Prostate gland (tissue), 2 donors: ENCODE measurements at regions of chr2 and their contacts with region 1.

Region 1: GRCh38 chr2:205680067-205680466 is 2.2 kb upstream of the NRP2 start:
- DNase-seq: no peak
- H3K4me3 ChIP-seq: no peak overlapping the region
- H3K27ac ChIP-seq: no peak overlapping the region
- H3K4me1 ChIP-seq: no peaks in the 10 kb centered on the region
- H3K27me3 ChIP-seq: no peaks in the 10 kb centered on the region
- CTCF ChIP-seq: peak in 3 of 4 experiments; percentile 46 to 59 (median 57)
- POLR2A ChIP-seq: no peak

Region 2: GRCh38 chr2:204024503-204024902 is 1655.6 kb before region 1 on chr2:
- intact Hi-C with region 1: loop called (anchors 10 kb)
- DNase-seq: peak; percentile 37
- H3K4me3 ChIP-seq: no peak overlapping the region
- H3K27ac ChIP-seq: no peak overlapping the region
- H3K4me1 ChIP-seq: no peaks in the 10 kb centered on the region
- H3K27me3 ChIP-seq: no peaks in the 10 kb centered on the region
- CTCF ChIP-seq: peak in 3 of 4 experiments; percentile 40 to 72 (median 61)
- POLR2A ChIP-seq: no peak

Region 3: DNA sequence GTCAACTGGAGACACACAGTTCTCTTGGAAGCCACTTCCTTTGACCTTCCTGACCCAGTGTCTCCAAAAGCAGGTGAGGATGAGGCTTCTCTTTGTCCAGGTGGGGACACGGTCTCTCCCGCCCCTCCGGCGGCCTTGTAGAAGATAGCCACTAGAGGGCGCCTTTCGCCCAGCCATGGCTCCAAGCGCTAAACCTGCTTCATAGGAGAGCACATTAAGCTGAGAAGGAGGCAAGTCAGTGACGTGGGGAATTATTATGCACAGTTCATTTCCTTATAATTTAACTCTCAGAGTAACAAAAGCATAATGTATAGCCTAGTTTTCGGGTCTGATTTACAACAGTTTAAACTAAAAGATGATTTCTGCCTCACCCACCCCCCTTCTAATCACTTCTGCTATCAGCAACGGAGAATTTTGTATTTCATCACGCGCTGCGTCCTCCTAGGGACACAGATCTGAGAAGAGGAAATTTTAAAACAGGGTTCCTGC is 1534.8 kb before region 1 on chr2:
- intact Hi-C with region 1: loop called (anchors 10 kb)
- DNase-seq: peak; percentile 67
- H3K4me3 ChIP-seq: peak overlapping the region; percentile 2 to 28
- H3K27ac ChIP-seq: peak overlapping the region in 1 of 2 donors; percentile 22
- H3K4me1 ChIP-seq: no peaks in the 10 kb centered on the region
- H3K27me3 ChIP-seq: no peaks in the 10 kb centered on the region
- CTCF ChIP-seq: peak; percentile 85 to 90 (median 88)
- POLR2A ChIP-seq: no peak

Region 4: GRCh38 chr2:204325468-204325867 is 1354.6 kb before region 1 on chr2:
- intact Hi-C with region 1: loop called (anchors 2 kb)
- DNase-seq: peak; percentile 58
- H3K4me3 ChIP-seq: no peak overlapping the region
- H3K27ac ChIP-seq: no peak overlapping the region
- H3K4me1 ChIP-seq: no peaks in the 10 kb centered on the region
- H3K27me3 ChIP-seq: no peaks in the 10 kb centered on the region
- CTCF ChIP-seq: peak; percentile 71 to 90 (median 88)
- POLR2A ChIP-seq: no peak

Region 5: GRCh38 chr2:205885492-205886099 is 205.5 kb after region 1 on chr2:
- intact Hi-C with region 1: loop called (anchors 5 kb)
- DNase-seq: peak; percentile 78
- H3K4me3 ChIP-seq: no peak overlapping the region
- H3K27ac ChIP-seq: no peak overlapping the region
- H3K4me1 ChIP-seq: no peaks in the 10 kb centered on the region
- H3K27me3 ChIP-seq: no peaks in the 10 kb centered on the region
- CTCF ChIP-seq: peak; percentile 61 to 91 (median 89)
- POLR2A ChIP-seq: no peak